H1 (cell line): ENCODE measurements at regions of chr18 and their contacts with region 1.

Region 1: GRCh38 chr18:8747440-8747937 is 42.1 kb downstream of the MTCL1 start:
- DNase-seq: no peak
- H3K4me3 ChIP-seq: no peak overlapping the region
- H3K27ac ChIP-seq: no peak overlapping the region
- H3K4me1 ChIP-seq: no peaks in the 10 kb centered on the region; a peak in 1 of 7 replicates
- H3K27me3 ChIP-seq: no peaks in the 10 kb centered on the region
- CTCF ChIP-seq: no peak
- EP300 ChIP-seq: no peak
- POLR2A ChIP-seq: no peak
- RAD21 ChIP-seq: no peak

Region 2: DNA sequence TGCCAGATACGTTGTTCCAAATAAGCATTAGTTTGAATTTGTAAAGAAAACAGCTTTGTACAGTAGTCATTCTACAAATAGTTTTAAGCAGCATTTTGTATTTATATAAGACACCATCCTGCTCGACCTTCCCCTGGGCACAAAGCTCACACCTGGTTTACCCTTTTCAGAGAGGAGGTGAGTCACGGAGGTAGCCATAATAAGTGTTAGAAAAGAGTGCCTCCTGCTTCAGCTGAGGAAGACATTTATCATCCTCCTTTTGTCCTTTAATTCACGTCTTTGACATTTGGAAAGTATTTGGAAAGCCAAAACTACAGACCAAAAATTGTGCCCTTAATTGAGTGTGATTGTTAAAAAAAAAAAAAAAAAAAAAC is 131.5 kb before region 1 on chr18:
- CTCF ChIA-PET with region 1: no interaction called
- POLR2A ChIA-PET with region 1: no interaction called
- DNase-seq: no peak
- H3K4me3 ChIP-seq: peak overlapping the region in 1 of 4 experiments; percentile 16; a peak in 1 of 8 replicates
- H3K27ac ChIP-seq: no peak overlapping the region
- H3K4me1 ChIP-seq: peaks cover 10 to 42% (median 22%) of the 10 kb centered on the region in 4 experiments
- H3K27me3 ChIP-seq: no peaks in the 10 kb centered on the region
- CTCF ChIP-seq: no peak
- EP300 ChIP-seq: no peak
- POLR2A ChIP-seq: no peak
- RAD21 ChIP-seq: no peak

Region 3: DNA sequence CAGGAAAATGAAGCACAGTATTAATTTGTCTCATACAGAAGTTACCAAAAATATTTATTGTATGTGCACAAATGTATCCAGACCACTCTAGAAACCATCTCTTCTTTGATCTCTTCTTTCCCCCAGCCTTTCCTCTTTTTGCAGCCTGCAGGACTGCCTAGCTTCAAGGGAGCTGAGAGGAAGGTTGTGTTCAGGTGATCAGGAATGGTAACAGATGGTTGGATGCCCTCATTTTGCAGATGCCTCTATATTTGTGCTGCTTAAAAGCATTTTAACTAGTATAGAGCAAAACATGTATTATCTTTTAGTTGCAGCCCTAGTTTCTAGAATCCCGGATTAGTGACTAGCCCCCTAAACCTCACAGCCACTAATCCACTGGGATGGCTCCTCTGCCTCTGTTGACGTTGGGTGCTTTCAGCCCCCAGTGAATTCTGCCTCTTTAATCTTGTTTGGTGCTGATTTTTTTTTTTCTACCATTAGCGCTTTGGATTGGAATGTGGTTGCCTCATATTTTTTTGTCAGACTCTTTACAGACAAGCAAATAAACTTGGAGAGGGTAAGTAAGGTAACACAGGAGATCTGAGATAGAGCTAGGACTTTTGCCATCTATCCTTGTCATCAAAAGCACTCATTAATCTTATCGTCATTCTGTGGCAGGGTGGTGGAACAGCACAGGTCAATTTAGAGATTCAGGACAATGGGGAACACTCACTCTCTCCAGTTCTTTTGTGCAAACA is 251.2 kb after region 1 on chr18:
- CTCF ChIA-PET with region 1: interaction called, 10 read pairs
- POLR2A ChIA-PET with region 1: no interaction called
- DNase-seq: no peak
- H3K4me3 ChIP-seq: no peak overlapping the region
- H3K27ac ChIP-seq: no peak overlapping the region
- H3K4me1 ChIP-seq: peaks cover 0 to 3% (median 0%) of the 10 kb centered on the region in 4 experiments; a peak in 3 of 7 replicates
- H3K27me3 ChIP-seq: no peaks in the 10 kb centered on the region; a peak in 1 of 7 replicates
- CTCF ChIP-seq: no peak
- EP300 ChIP-seq: no peak
- POLR2A ChIP-seq: no peak
- RAD21 ChIP-seq: no peak